Calu3 (cell line): ENCODE measurements at regions of chr5 and their contacts with region 1.

Region 1: DNA sequence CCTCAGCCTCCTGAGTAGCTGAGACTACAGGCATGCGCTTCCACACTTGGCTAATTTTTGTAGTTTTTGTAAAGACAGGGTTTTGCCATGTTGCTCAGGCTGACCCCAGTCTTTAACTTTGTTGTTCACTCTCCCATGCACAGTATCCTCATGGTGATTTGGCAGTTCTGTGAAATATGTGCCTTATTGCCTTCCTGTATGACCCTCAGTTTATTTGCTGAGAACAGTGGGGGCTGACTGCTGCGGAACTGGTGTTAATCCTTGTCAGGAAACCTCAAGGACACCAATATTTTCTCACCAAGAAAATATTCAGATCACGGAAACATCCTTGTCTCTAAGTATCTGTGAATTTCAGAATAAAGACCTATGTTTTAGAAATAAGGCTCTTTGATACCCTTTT is 287.8 kb downstream of the ARRDC3 start:
- DNase-seq: no peak
- H3K4me3 Mint-ChIP-seq: no peak overlapping the region
- H3K27ac Mint-ChIP-seq: no peak overlapping the region
- H3K4me1 Mint-ChIP-seq: no peaks in the 10 kb centered on the region
- H3K27me3 Mint-ChIP-seq: no peaks in the 10 kb centered on the region
- CTCF ChIP-seq: no peak

Region 2: DNA sequence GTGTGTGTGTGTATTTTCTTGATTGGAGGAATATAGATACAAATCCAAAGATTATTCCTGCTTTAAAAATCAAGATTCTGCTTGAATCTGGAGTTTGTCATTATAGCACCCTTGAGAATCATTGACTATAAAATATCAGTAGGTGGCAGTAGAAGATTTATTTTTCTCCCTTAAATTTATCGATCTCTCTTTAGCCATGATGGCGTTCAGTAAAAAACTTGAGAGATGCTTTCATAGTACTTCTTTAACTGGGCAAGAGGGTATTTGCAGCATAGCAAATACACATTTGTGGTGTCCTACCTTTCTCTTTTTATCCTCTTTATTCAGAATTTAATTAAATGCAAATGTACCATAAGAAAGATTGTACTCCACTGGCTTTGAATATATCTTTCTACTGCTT is 229.0 kb before region 1 on chr5:
- CTCF ChIA-PET with region 1: no interaction called
- intact Hi-C with region 1: loop called (anchors 1 kb)
- DNase-seq: no peak
- H3K4me3 Mint-ChIP-seq: no peak overlapping the region
- H3K27ac Mint-ChIP-seq: no peak overlapping the region
- H3K4me1 Mint-ChIP-seq: peaks cover 10% of the 10 kb centered on the region
- H3K27me3 Mint-ChIP-seq: no peaks in the 10 kb centered on the region
- CTCF ChIP-seq: peak; percentile 64

Region 3: DNA sequence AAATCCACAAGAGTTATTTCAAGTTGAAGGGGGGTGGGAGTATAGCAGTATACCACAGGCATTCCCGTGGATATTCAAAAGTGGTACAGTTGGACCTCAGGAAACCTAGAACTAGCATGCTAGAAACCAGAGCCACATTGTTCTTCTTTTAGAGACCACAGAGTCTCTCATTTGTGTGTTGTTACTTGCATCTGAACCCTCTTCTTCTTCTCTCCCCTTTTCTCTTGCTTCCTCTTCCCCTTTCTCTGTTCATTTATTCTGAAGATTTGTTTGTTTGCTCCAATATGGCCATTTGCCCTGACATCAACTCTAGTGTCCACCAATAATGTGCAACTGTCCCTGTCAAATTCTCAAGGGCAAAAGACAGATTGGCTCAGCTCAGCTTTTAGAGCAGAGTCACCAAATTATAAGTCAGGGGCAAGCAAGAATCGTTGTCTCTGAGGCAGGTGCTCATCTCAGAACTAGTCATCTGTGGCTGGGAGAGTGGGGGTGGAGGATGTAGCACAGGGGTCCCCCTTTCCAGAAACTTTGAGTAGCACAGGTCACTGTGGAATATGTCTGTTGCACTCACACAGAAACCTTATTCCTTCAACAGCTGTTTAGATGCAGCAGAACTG is 33.3 kb before region 1 on chr5:
- CTCF ChIA-PET with region 1: no interaction called
- intact Hi-C with region 1: no loop called
- DNase-seq: no peak
- H3K4me3 Mint-ChIP-seq: no peak overlapping the region
- H3K27ac Mint-ChIP-seq: no peak overlapping the region
- H3K4me1 Mint-ChIP-seq: peaks cover 41% of the 10 kb centered on the region
- H3K27me3 Mint-ChIP-seq: no peaks in the 10 kb centered on the region
- CTCF ChIP-seq: no peak

Region 4: GRCh38 chr5:91110686-91111085 is 15.4 kb after region 1 on chr5:
- CTCF ChIA-PET with region 1: no interaction called
- intact Hi-C with region 1: no loop called
- DNase-seq: no peak
- H3K4me3 Mint-ChIP-seq: no peak overlapping the region
- H3K27ac Mint-ChIP-seq: no peak overlapping the region
- H3K4me1 Mint-ChIP-seq: no peaks in the 10 kb centered on the region
- H3K27me3 Mint-ChIP-seq: no peaks in the 10 kb centered on the region
- CTCF ChIP-seq: no peak